Activated CD4-positive, alpha-beta T cell treated with anti-CD3 and anti-CD28 coated beads for 36 hours (primary cell): ENCODE measurements at regions of chr19 and their contacts with region 1.

Region 1: GRCh38 chr19:51593969-51594773 is 23.1 kb downstream of the ZNF175 start:
- DNase-seq: peak; percentile 99
- ATAC-seq: peak; percentile 100
- H3K4me3 Mint-ChIP-seq: peak overlapping the region; percentile 84
- H3K27ac Mint-ChIP-seq: peak overlapping the region; percentile 81
- H3K4me1 Mint-ChIP-seq: peaks cover 18% of the 10 kb centered on the region
- H3K27me3 Mint-ChIP-seq: peaks cover 5% of the 10 kb centered on the region

Region 2: DNA sequence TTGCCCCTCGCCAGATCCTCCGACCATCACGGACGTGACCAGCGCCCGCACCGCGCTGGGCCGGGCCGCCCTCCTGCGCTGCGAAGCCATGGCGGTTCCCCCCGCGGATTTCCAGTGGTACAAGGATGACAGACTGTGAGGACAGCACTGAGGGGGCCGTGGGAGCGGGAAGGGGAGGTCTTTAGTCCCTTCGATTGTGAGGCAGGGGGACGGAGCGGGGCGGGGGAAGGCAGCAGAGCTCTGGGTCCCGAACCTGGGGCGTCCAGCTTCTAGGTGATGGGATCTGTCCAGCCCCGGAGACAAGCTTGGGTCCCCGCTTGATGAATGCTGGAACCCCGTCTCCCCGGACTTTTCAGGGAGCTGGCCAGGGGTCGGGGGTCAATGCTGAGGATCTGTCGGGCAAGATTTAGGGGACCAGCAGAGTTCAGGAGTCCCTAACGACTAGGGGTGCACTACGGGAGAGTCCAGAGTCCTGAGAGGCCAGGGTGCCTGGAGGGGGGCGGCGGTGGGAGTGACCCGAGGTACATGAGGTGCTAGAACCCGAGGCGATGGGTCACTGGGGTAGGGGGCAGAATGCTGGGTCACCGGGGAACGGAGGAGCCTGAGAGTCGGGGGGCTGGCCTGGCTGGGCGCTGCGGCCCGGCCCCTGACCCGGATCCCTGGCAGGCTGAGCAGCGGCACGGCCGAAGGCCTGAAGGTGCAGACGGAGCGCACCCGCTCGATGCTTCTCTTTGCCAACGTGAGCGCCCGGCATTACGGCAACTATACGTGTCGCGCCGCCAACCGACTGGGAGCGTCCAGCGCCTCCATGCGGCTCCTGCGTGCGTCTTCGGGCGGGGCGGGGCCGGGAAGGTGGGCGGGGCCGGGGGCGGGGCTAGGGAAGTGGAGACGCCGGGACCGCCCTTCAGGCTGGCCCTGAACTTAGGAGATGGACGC is 266.8 kb before region 1 on chr19:
- CTCF ChIA-PET with region 1: interaction called, 3 read pairs
- POLR2A ChIA-PET with region 1: no interaction called
- intact Hi-C with region 1: loop called in 1 of 2 experiments (anchors 1 kb)
- DNase-seq: peak; percentile 87
- ATAC-seq: peak; percentile 93
- H3K4me3 Mint-ChIP-seq: peak overlapping the region; percentile 35
- H3K27ac Mint-ChIP-seq: no peak overlapping the region
- H3K4me1 Mint-ChIP-seq: peaks cover 8% of the 10 kb centered on the region
- H3K27me3 Mint-ChIP-seq: peaks cover 60% of the 10 kb centered on the region

Region 3: GRCh38 chr19:51367565-51368365 is 226.4 kb before region 1 on chr19:
- CTCF ChIA-PET with region 1: no interaction called
- POLR2A ChIA-PET with region 1: no interaction called
- intact Hi-C with region 1: loop called in 1 of 2 experiments (anchors 1 kb)
- DNase-seq: peak; percentile 99
- ATAC-seq: peak; percentile 83
- H3K4me3 Mint-ChIP-seq: peak overlapping the region; percentile 90
- H3K27ac Mint-ChIP-seq: peak overlapping the region; percentile 97
- H3K4me1 Mint-ChIP-seq: peaks cover 58% of the 10 kb centered on the region
- H3K27me3 Mint-ChIP-seq: no peaks in the 10 kb centered on the region

Region 4: GRCh38 chr19:51570962-51571575 is 23.1 kb before region 1 on chr19 and contains the start of gene ZNF175:
- CTCF ChIA-PET with region 1: interaction called, 3 read pairs
- POLR2A ChIA-PET with region 1: interaction called, 5 read pairs
- intact Hi-C with region 1: loop called (anchors 1 kb)
- DNase-seq: peak; percentile 91
- ATAC-seq: peak; percentile 96
- H3K4me3 Mint-ChIP-seq: peak within 1 kb of the TSS; percentile 91
- H3K27ac Mint-ChIP-seq: peak within 1 kb of the TSS; percentile 89
- H3K4me1 Mint-ChIP-seq: peaks cover 31% of the 10 kb centered on the region
- H3K27me3 Mint-ChIP-seq: peaks cover 2% of the 10 kb centered on the region
- total RNA-seq, gene ZNF175: 5.9 to 9.6 TPM

Region 5: DNA sequence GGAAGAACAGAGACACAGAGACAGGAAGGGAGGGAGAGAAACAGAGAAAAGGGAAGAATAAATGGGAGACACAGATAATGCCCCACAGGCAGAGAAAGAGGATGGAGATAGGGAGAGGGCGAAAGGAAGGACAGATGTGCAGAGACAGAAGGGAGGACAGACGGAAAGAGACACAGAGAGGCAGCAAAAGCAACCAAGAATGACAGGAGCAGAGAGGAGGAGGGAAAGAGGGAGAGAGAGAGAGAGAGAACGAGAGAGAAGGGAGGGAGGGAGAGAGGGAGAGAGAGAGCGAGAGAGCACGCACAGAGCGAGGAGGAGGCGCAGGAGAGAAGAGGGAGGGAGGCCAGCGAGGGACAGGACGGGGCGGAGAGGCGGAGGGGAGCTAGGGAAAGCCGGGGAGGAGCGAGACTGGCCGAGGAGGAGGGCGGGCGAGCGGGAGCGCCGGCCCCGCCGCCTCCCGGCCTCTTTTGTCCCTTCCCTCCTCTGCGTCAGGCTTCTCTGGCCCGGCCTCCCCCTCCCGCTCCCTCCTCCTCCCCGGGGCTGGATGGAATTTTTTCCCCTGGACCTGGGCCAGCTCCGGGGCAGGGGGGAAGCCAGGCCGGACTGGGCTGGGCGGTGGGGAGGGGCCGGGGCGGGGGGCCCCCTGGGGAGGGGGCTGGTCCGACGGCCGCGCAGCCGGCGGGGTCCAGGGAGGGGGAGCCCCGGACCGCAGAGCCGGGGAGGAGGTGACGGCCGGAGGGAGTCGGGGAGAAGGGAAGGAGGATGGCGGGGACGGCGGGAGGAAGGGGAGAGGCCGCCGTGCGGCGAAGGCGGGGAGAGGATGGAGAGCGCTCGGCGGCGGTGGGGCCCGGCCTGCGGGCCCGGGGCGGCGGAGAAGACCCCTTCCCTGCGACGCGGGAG is 94.8 kb after region 1 on chr19:
- CTCF ChIA-PET with region 1: no interaction called
- POLR2A ChIA-PET with region 1: no interaction called
- intact Hi-C with region 1: loop called in 1 of 2 experiments (anchors 1 kb)
- DNase-seq: peak; percentile 50
- ATAC-seq: no peak
- H3K4me3 Mint-ChIP-seq: peak overlapping the region; percentile 90
- H3K27ac Mint-ChIP-seq: peak overlapping the region; percentile 49
- H3K4me1 Mint-ChIP-seq: peaks cover 15% of the 10 kb centered on the region
- H3K27me3 Mint-ChIP-seq: no peaks in the 10 kb centered on the region

Region 6: GRCh38 chr19:51784922-51785690 is 190.9 kb after region 1 on chr19:
- CTCF ChIA-PET with region 1: no interaction called
- POLR2A ChIA-PET with region 1: no interaction called
- intact Hi-C with region 1: no loop called
- DNase-seq: peak; percentile 87
- ATAC-seq: peak; percentile 97
- H3K4me3 Mint-ChIP-seq: no peak overlapping the region
- H3K27ac Mint-ChIP-seq: no peak overlapping the region
- H3K4me1 Mint-ChIP-seq: peaks cover 4% of the 10 kb centered on the region
- H3K27me3 Mint-ChIP-seq: peaks cover 16% of the 10 kb centered on the region